ENCODE measurements at regions of chr5 and their contacts with region 1.

Region 1: DNA sequence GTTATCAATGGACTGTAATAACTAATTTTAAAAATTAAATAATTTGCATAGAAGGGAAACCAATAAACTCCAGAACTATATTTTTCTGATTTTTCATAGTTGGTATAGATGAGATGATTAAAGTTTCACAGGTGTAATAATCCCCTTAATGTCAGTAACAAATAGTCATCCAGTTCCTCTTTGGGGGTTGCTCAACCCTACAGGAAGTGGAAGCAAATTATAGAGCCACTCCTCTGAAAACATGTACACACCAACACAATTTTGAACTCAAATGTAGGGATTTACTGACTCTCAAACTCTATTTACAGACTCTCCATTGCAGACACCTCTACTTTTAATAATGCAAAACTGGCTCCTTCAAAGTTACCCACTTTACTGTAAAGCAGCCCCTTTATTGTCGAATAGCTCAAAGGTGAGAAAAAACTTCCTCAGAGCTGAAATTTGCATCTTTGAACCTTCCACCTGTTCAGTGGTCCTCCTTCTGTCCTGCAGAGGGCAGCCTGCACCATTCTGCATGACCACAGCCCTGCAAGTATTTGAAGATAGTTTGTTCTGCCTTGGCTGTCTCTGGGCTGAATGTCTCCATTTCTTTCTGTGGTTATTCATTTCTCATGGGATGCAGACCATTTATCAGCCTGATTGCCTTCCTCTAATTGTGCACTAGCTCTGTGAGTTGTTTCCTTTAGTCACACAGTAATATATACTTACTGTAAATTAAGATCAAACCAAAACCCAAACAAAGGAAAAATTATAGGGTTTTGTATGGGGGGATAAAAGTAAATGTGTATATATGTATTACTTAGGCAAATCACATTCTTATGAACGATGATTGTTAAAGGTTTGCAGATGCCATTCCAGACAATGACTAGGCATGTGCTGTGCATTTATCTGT is 383.2 kb upstream of the SGCD start:
- DNase-seq: peak; percentile 40
- CTCF ChIP-seq: peak; percentile 70

Region 2: GRCh38 chr5:155655569-155655968 is 288.2 kb before region 1 on chr5:
- CTCF ChIA-PET with region 1: no interaction called
- POLR2A ChIA-PET with region 1: no interaction called
- DNase-seq: no peak
- CTCF ChIP-seq: no peak

Region 3: GRCh38 chr5:155872629-155873220 is 71.0 kb before region 1 on chr5:
- CTCF ChIA-PET with region 1: no interaction called
- POLR2A ChIA-PET with region 1: no interaction called
- DNase-seq: no peak
- CTCF ChIP-seq: no peak

Region 4: GRCh38 chr5:156000115-156000514 is 56.4 kb after region 1 on chr5:
- CTCF ChIA-PET with region 1: no interaction called
- POLR2A ChIA-PET with region 1: no interaction called
- DNase-seq: no peak
- CTCF ChIP-seq: no peak

Region 5: DNA sequence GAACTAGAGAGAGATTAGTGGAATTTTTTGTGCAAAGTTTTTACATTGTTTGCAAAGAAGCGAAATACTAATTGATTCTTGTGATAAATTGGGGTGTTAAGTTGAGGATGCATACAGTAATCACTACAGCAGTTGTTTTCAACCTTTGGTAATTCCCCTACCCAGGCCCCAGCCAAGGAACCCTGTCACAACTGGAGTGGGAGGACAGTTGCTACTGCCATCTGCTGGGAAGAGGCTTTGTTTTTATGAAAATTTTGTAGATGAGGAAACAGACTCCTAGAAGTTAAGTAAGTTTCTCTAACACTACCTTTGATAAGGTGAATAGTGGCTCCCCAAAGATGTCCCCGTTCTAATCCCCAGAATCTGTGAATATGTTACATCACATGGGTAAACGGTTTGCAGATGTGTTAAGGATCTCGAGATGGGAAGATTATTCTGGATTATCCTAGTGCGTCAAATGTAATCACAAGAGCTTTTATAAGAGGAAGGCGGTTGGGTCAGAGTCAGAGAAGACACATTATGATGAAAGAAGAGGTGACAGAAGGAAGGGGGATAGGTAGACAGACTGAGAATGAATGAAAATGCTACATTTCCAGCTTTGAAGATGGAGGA is 872.3 kb after region 1 on chr5:
- CTCF ChIA-PET with region 1: interaction called, 15 read pairs
- POLR2A ChIA-PET with region 1: no interaction called
- DNase-seq: peak; percentile 46
- CTCF ChIP-seq: peak; percentile 32

Measured in GM10248 (cell line).